ENCODE measurements at regions of chr1 and their contacts with region 1.

Region 1: DNA sequence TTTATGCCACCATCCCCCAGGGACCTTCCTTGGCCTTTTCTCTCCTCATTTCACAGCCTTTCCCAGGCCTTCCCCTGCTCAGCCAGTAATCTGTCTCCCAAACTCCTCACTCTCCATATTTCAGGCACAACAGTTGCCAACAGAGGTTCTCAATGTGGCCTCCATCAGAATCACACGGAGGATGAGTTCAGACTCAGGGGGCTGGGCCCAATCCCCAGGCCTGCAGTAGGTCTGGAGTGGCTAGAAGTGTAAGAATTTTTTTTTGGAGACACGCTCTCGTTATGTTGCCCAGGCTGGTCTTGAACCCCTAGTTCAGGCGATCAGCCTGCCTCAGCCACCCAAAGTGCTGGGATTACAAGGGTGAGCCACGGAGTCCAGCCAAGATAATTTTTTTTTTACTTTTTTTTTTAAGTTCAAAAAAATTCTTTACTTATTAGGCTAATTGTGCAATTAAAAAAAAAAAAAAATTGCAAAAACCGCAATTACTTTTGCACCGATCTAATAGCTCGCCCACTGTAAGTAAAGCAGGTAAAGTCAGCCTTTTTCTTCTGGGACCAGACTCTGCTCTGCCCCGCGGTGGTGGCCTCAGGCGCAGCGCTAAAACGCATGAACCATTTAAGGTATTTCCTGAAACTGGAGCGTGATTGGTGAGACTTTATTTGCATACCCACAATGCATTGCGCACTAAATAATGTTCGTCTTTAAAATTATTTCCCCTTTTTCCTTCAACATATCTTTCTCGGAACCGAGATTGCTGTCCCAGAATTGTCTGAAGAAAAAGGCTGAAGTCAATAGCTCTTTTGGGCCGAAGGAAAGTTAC is 18.7 kb downstream of the KIAA2013 start:
- DNase-seq: peak; percentile 79 to 97 (median 94)
- ATAC-seq: peak; percentile 60 to 65
- H3K4me3 Mint-ChIP-seq: peak overlapping the region; percentile 88 to 97 (median 94)
- H3K27ac Mint-ChIP-seq: peak overlapping the region; percentile 99 to 100 (median 100)
- H3K4me1 Mint-ChIP-seq: peaks cover 24 to 54% (median 34%) of the 10 kb centered on the region in 4 donors
- H3K27me3 Mint-ChIP-seq: peaks cover 0 to 11% (median 3%) of the 10 kb centered on the region in 5 donors

Region 2: DNA sequence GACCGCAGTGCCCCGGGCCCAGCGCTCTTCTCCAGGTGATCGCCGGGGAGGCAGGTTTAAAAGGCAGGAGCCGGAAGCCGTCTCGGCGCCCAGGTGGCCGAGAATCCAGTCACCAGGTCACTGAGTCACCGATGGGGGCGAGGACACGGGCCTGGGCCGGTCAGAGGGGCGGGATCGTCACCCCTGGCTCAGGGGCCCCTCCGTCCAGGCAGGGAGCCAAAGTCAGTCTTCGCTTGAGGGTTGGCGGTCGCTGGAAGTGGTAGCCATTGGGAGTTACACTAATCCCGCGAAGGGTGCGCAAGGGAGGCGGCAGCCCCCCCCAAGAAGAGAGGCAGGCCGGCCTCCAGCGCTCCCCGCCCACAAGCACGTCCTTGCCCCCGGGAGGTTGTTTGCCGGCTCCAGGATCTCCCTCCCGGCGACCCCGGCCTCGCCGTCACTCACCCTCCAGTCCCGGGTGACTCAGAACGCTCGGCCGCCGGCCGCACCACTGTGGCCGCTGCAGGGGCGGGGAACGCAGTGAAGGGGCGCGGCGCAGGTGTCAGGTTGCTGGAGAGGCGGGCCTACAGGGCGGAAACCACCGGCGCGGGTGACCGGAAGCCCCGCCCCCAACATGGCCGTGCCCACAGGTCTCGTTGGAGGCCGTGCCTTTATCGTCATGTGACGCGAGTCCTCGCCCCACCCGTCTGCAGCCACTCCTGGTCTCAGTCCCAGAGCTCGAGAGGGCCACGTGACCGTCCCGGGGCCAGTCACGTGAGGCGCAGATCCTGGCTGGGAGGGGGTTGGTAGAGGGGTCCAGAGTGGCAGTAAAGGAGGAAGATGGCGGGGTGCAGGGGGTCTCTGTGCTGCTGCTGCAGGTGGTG is 101.8 kb before region 1 on chr1 and contains the starts of genes CLCN6 and MTHFR:
- POLR2A ChIA-PET with region 1: interaction called, 28 read pairs
- DNase-seq: peak; percentile 95 to 99 (median 97)
- ATAC-seq: peak; percentile 82 to 87
- H3K4me3 Mint-ChIP-seq: peak within 1 kb of the TSS; percentile 92 to 100 (median 99)
- H3K27ac Mint-ChIP-seq: peak within 1 kb of the TSS; percentile 94 to 99 (median 98)
- H3K4me1 Mint-ChIP-seq: peaks cover 28 to 72% (median 69%) of the 10 kb centered on the region in 4 donors
- H3K27me3 Mint-ChIP-seq: no peaks in the 10 kb centered on the region
- polyA plus RNA-seq, gene CLCN6: 1.2 to 2.8 (median 2.1) TPM
- polyA plus RNA-seq, gene MTHFR: 3.7 to 9.5 (median 8.0) TPM

Region 3: GRCh38 chr1:11918779-11919519 is 11.5 kb after region 1 on chr1:
- POLR2A ChIA-PET with region 1: interaction called, 37 read pairs
- DNase-seq: no peak
- ATAC-seq: no peak
- H3K4me3 Mint-ChIP-seq: no peak overlapping the region
- H3K27ac Mint-ChIP-seq: peak overlapping the region in 1 of 10 donors; percentile 13
- H3K4me1 Mint-ChIP-seq: peaks cover 14 to 40% (median 28%) of the 10 kb centered on the region in 4 donors
- H3K27me3 Mint-ChIP-seq: no peaks in the 10 kb centered on the region

Region 4: DNA sequence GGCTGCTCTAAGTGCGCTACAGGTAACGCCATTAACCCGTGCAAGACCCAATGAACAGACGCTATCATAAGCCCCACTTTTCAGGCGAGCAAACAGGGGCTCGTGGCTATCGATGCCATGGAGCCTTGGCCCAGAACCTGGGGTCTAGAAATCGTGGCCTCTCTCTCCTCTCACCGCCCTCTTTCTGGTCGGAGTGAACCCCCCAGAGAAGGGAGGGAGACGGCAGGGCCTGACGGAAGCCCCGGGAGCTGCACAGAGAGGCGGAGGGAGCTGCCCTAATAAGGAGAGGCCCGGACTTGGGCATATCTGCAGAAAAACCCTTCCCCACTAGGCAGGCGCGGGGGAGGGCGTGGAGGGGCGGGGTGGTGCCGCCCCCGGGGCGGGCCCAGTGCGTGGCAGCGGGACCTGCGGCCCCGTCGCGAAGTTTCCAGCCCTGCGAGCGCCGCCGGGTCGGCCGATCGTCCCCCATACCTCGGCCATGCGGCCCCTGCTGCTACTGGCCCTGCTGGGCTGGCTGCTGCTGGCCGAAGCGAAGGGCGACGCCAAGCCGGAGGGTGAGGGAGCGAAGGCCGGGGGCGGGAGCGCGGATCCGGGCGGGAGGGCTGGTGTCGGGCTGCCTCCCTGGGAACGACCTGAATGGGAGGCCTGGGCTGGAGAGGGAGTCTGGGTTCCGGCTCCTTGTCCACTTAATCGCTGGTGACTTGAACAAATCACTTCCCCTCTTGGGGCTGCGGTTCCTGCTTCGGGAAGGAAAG is 27.0 kb after region 1 on chr1 and contains the start of gene PLOD1:
- POLR2A ChIA-PET with region 1: interaction called, 32 read pairs
- DNase-seq: peak; percentile 60 to 90 (median 72)
- ATAC-seq: peak; percentile 99
- H3K4me3 Mint-ChIP-seq: peak within 1 kb of the TSS; percentile 74 to 90 (median 84)
- H3K27ac Mint-ChIP-seq: peak within 1 kb of the TSS in 7 of 10 donors; percentile 41 to 82 (median 69)
- H3K4me1 Mint-ChIP-seq: peaks cover 0 to 10% (median 3%) of the 10 kb centered on the region in 4 donors
- H3K27me3 Mint-ChIP-seq: no peaks in the 10 kb centered on the region
- polyA plus RNA-seq, gene PLOD1: 5.0 to 7.9 (median 5.7) TPM

Region 5: GRCh38 chr1:11961230-11961629 is 53.7 kb after region 1 on chr1:
- POLR2A ChIA-PET with region 1: no interaction called
- DNase-seq: no peak
- ATAC-seq: no peak
- H3K4me3 Mint-ChIP-seq: no peak overlapping the region
- H3K27ac Mint-ChIP-seq: peak overlapping the region in 1 of 10 donors; percentile 9
- H3K4me1 Mint-ChIP-seq: no peaks in the 10 kb centered on the region
- H3K27me3 Mint-ChIP-seq: no peaks in the 10 kb centered on the region

Region 6: GRCh38 chr1:12019858-12020509 is 112.5 kb after region 1 on chr1:
- POLR2A ChIA-PET with region 1: interaction called, 34 read pairs
- DNase-seq: peak in 2 of 10 donors; percentile 8 to 10
- ATAC-seq: no peak
- H3K4me3 Mint-ChIP-seq: peak overlapping the region; percentile 76 to 93 (median 87)
- H3K27ac Mint-ChIP-seq: peak overlapping the region in 7 of 10 donors; percentile 46 to 93 (median 56)
- H3K4me1 Mint-ChIP-seq: peaks cover 3 to 26% (median 14%) of the 10 kb centered on the region in 4 donors
- H3K27me3 Mint-ChIP-seq: peaks cover 0 to 2% (median 0%) of the 10 kb centered on the region in 5 donors

Region 7: DNA sequence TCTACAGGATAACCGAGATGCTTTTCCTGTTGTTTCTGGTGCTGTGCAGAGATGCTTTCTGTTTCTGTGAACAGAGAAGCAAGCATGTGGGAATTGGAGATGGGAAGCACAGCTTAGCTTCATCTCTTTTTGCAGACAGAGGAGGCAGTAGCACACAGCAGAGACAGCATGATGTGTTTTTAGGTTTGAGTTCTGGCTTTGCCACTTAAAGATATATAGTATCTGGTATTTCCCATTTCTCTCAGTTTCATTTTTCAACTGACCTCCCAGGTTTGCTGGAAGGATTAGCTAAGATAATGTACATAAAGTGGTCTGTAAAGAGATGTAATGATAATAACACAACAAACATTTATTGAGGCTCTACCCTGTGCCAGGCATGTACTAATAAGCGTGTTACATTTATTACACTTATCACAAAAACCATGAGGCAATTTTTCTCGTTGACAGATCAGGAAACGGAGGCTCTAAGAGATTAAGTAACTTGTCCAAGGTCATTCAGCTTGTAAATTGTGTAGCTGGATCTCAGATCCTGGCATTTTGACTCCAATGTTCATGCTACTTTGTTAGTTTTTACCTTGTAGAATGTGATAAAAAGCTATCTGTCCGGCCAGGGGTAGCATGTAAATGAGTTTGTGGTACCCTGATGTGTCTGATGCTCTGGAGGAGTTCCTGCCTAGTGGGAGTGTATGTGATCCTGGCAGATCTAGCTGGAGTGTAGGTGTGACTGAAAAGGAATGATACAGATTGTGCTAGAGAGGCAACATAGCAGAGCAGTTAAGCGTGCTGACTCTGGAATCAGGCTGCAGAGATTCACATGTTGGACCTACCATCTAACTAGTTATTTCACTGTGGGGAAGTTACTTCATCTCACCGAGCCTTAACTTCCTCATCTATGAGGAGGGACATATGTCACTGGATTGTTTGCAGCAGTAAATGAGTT is 468.9 kb after region 1 on chr1:
- POLR2A ChIA-PET with region 1: no interaction called
- DNase-seq: no peak
- ATAC-seq: no peak
- H3K4me3 Mint-ChIP-seq: no peak overlapping the region
- H3K27ac Mint-ChIP-seq: peak overlapping the region in 2 of 10 donors; percentile 5 to 49
- H3K4me1 Mint-ChIP-seq: peaks cover 2 to 11% (median 6%) of the 10 kb centered on the region in 4 donors
- H3K27me3 Mint-ChIP-seq: no peaks in the 10 kb centered on the region